IMR-90 (cell line): ENCODE measurements at regions of chr11 and their contacts with region 1.

Region 1: DNA sequence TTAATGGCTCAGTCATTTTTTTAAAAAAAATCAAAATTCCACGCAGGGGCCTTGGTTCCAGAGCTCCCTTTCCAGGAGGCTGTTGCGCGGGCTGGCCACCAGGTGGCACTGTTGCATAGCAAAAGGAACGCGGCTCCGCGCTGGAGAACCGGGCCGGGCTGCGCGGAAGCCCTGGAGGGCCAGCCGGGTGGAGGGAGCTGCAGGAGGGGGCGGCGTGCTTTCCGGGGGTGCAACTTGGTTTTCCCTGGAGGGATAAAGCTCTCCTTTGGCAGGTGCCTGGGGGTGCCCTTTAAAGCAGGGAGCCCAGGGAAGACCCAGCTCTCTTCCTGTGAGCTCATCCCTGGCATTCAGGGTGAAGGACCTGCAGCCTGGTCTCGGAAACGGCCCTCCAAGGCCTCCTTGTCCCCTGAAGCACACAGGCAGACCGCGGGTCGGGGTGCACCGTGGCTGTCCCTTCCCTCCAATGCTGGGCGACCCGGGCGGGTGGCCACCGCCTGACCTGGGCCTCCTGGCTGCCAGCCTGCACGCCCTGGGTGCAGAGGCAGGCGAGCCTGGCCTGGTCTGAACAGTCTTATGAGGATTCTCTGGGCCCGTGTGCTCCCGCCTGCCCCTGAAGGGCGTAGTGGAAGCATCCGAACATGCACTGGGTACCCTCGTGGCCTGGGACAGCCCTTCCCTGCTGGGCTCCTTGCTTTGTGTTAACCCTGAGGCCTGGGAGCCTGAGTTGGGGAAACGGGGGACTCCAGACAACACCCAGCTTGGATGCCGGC is 23.4 kb downstream of the KRTAP5-5 start:
- DNase-seq: peak; percentile 29
- ATAC-seq: peak; percentile 97
- H3K4me3 ChIP-seq: no peak overlapping the region
- H3K27ac ChIP-seq: no peak overlapping the region
- H3K4me1 ChIP-seq: no peaks in the 10 kb centered on the region; the same call in 1 of the 2 replicates
- H3K27me3 ChIP-seq: peaks cover 51% of the 10 kb centered on the region
- CTCF ChIP-seq: peak; percentile 93
- POLR2A ChIP-seq: no peak
- RAD21 ChIP-seq: peak; percentile 90

Region 2: GRCh38 chr11:1694064-1694845 is 41.3 kb after region 1 on chr11:
- CTCF ChIA-PET with region 1: interaction called, 3 read pairs
- POLR2A ChIA-PET with region 1: no interaction called
- dilution Hi-C with region 1: no loop called
- in situ Hi-C with region 1: no loop called
- intact Hi-C with region 1: loop called (anchors 2 kb)
- DNase-seq: peak; percentile 61
- ATAC-seq: peak; percentile 97
- H3K4me3 ChIP-seq: no peak overlapping the region
- H3K27ac ChIP-seq: no peak overlapping the region
- H3K4me1 ChIP-seq: peaks cover 1% of the 10 kb centered on the region; the same call in 1 of the 2 replicates
- H3K27me3 ChIP-seq: peaks cover 55% of the 10 kb centered on the region
- CTCF ChIP-seq: peak; percentile 94
- POLR2A ChIP-seq: no peak
- RAD21 ChIP-seq: peak; percentile 93

Region 3: DNA sequence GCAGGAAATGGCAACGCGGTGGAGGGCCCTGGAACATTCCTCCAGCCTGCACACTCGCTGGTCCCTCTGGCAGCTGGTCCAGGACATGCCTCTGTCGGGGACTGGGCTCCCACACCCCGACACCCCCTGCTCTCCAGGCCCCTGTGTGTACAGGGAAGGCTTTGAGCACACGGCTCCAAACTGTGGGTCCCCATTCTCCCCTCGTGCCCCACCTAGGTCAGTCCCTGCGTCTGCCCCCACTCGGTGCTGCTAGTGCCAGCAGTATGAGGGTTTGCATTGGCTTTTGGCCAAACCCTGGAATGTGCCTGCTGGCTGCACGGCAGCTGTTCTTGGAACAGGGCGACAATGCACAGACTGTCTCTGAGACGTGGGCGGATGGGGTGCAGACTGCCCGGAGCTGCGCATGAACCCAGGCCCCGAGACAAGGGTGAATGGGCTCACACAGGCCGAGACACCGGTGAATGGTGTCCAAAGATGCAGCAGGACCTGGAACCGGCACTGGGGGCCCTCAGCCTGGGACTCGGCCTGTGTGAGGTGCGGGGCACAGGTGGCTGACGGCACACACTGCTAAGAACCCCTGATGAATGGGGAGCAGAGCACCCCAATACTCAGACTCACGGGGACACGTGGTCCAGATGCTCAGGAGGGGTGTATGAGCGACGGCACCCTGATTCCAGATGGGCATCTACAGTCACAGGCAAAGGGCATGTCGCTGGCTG is 174.3 kb after region 1 on chr11:
- CTCF ChIA-PET with region 1: interaction called, 3 read pairs
- POLR2A ChIA-PET with region 1: no interaction called
- dilution Hi-C with region 1: no loop called
- in situ Hi-C with region 1: no loop called
- intact Hi-C with region 1: loop called (anchors 5 kb)
- DNase-seq: peak; percentile 65
- ATAC-seq: peak; percentile 73
- H3K4me3 ChIP-seq: no peak overlapping the region
- H3K27ac ChIP-seq: no peak overlapping the region
- H3K4me1 ChIP-seq: peaks cover 15% of the 10 kb centered on the region
- H3K27me3 ChIP-seq: peaks cover 13% of the 10 kb centered on the region; the same call in 1 of the 2 replicates
- CTCF ChIP-seq: no peak
- POLR2A ChIP-seq: no peak
- RAD21 ChIP-seq: no peak

Region 4: DNA sequence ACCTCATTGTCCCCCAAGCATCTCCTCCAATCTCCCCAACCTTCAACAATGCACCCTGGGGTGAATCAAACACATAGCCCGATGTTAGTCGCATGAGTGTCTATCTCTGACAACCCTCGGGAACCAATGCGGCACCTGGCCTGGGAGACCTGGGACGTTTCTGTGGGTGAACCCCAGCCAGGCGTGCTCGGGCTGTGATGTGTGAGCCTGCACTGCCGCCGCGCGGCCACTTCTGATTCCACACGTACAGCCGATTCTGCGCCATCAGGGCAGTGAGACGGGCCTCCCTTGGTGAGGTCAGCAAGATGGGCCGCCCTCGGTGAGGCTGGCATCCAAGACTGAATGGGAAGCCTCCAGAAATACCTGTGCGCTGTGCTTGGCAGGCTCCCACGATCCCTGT is 349.9 kb after region 1 on chr11:
- CTCF ChIA-PET with region 1: interaction called, 16 read pairs
- POLR2A ChIA-PET with region 1: no interaction called
- dilution Hi-C with region 1: no loop called
- in situ Hi-C with region 1: no loop called
- intact Hi-C with region 1: no loop called
- DNase-seq: no peak
- ATAC-seq: peak; percentile 72
- H3K4me3 ChIP-seq: no peak overlapping the region
- H3K27ac ChIP-seq: no peak overlapping the region
- H3K4me1 ChIP-seq: no peaks in the 10 kb centered on the region
- H3K27me3 ChIP-seq: no peaks in the 10 kb centered on the region
- CTCF ChIP-seq: no peak
- POLR2A ChIP-seq: no peak
- RAD21 ChIP-seq: no peak